ENCODE measurements at regions of chr19 and their contacts with region 1.

Region 1: DNA sequence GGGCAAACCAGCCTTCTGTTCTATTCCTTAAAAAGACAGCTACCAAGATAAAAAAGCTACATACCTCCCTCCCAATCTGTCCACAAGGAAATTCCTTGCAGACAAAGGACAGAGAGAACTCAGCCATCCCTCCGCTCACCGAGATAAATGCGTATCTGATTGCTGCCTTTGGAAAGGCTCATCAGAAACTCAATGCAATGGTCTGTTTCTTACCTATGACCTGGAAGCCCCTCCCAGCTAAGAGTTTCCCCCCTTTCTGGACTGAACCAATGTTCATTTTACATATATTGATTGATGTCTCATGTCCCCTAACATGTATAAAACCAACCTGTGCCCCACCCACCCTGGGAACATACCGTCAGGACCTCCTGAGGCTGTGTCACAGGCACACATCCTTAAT is 11.6 kb downstream of the BTBD2 start:
- DNase-seq: no peak
- H3K4me3 ChIP-seq: no peak overlapping the region
- H3K27ac ChIP-seq: no peak overlapping the region
- H3K4me1 ChIP-seq: no peaks in the 10 kb centered on the region
- H3K27me3 ChIP-seq: no peaks in the 10 kb centered on the region
- CTCF ChIP-seq: no peak

Region 2: DNA sequence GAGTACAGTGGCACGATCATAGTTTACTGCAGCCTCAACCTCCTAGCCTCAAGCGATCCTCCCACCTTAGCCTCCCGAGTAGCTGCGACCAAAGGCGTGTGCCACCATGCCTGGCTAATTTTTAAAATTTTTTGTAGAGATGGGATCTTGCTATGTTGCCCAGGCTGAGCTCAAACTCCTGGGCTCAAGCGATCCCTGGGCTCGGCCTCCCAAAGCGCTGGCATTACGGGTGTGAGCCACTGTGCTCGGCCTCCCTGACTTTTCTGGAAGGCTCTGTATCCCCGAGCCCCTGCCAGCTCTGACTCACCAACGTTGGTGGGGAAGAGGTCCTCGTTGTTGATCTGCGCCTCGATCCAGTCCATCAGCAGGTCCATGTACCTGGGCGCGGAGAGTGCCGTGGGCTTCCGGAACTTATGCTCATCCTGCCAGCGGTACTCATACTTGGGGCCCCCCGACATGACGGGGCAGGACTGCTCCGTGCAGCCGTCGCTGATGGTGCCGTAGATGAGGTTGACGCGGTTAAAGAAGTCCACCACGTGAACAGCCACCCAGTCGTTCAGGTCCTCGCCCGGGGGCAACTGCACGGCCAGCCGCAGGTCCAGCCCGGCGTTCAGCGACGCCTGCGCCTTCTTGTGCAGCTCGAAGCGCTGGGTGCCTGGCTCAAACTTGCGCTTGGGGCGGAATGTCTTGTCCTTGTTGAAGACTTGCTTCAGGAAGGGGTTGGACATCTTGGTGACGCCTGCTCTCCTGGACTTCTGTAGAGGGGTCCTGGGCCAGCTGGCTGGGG is 74.2 kb after region 1 on chr19:
- CTCF ChIA-PET with region 1: no interaction called
- POLR2A ChIA-PET with region 1: interaction called, 11 read pairs
- intact Hi-C with region 1: no loop called
- DNase-seq: no peak
- H3K4me3 ChIP-seq: no peak overlapping the region
- H3K27ac ChIP-seq: no peak overlapping the region
- H3K4me1 ChIP-seq: no peaks in the 10 kb centered on the region
- H3K27me3 ChIP-seq: no peaks in the 10 kb centered on the region
- CTCF ChIP-seq: no peak

Measured in PC-9 (cell line).